WTC11 (cell line): ENCODE measurements at regions of chr1 and their contacts with region 1.

Region 1: DNA sequence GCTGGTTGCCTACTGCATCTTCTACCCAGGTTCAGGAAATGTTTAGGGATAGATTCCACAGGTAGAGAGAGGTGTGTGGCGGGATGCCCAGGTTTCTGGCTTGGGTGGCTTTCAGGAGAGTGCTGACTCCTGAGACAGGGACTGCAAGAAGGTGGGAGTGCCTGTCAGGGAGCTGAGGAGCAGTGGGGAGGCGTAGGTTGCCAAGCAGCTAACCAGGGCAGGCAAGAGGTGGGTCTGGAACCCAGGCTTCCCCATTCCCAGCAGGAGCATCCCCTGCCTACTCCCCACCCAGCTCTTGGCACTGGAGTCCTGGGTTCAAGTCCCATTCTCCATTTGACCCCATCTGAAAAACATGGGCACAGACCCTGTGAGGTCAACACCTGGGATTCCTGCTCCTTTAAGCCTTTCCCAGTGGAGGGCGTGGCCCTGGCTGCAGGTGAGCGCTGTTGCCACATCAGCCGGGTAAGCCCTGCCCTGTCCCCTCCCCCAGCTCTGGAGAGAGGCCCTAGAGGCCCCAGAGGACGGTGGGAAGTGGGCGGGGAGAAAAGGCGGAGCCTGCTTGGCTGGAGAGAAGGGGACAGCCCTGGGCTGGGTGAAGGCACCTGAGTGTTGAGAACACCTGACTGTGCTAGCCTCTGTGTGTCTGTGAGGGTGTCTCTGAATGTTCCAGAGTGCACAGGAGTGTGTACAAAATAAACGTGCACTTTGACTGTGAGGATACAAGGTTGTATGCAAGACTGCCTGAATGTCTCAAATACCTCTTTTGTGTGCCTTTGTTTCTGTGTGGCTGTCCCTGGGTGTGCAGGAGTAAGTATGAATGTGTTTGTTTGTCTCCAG is 14.0 kb upstream of the SYNC start:
- DNase-seq: peak; percentile 99
- ATAC-seq: peak; percentile 95
- H3K4me3 Mint-ChIP-seq: peak overlapping the region; percentile 45
- H3K27ac Mint-ChIP-seq: peak overlapping the region; percentile 92
- H3K4me1 Mint-ChIP-seq: peaks cover 29% of the 10 kb centered on the region
- H3K27me3 Mint-ChIP-seq: peaks cover 3% of the 10 kb centered on the region
- CTCF ChIP-seq: no peak

Region 2: GRCh38 chr1:32400876-32401631 is 315.5 kb before region 1 on chr1:
- CTCF ChIA-PET with region 1: interaction called, 12 read pairs
- POLR2A ChIA-PET with region 1: no interaction called
- DNase-seq: peak; percentile 91
- ATAC-seq: peak; percentile 98
- H3K4me3 Mint-ChIP-seq: no peak overlapping the region
- H3K27ac Mint-ChIP-seq: no peak overlapping the region; the same call in 1 of the 2 replicates
- H3K4me1 Mint-ChIP-seq: no peaks in the 10 kb centered on the region; the same call in 1 of the 2 replicates
- H3K27me3 Mint-ChIP-seq: no peaks in the 10 kb centered on the region
- CTCF ChIP-seq: peak; percentile 78

Region 3: GRCh38 chr1:32612189-32612881 is 104.2 kb before region 1 on chr1:
- CTCF ChIA-PET with region 1: no interaction called
- POLR2A ChIA-PET with region 1: no interaction called
- DNase-seq: peak; percentile 90
- ATAC-seq: peak; percentile 99
- H3K4me3 Mint-ChIP-seq: peak overlapping the region; percentile 75
- H3K27ac Mint-ChIP-seq: peak overlapping the region; percentile 10
- H3K4me1 Mint-ChIP-seq: peaks cover 5% of the 10 kb centered on the region
- H3K27me3 Mint-ChIP-seq: no peaks in the 10 kb centered on the region
- CTCF ChIP-seq: no peak

Region 4: DNA sequence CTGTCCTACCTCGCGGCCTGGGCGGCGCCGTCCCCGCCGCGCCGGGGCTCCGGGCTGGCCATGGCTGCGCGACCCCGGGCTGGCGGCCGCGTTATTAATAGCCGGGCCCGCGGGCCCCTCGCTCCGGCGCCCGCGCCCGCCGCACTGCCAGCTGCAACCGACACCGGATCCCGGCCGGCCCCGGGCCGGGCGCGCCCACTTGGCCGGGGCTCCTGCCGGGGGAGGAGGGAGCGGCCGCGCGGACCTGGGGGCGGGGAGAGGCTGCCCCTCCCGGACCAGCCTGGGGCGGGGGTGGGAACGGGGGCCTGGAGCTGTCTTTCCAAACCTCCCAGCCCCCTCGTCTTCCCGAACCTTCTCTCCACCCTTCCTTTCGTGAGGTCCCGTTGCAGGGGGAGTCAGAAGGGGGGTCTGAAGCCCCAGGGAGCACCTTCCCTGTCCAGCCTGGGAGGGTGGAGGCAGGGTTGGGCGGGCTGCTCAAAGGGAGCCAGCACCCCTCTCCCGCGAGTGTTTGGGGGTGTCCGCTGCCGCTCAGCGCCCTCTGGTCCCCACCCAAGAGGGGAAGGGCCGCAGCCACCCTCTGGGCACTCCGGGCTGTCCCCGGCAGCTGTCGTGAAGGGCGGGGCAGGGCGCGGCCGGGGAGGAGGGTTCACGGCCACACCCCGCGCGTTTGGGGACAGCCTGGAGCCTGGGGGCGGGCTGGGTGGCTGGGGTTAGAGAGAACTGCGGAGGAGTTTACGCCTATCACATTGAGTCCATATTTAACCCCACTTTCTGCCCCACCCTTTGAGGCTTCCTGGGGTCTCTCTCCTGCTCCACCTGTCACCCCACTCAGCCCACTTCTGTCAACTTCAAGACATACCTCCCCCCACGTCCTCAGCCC is 13.7 kb before region 1 on chr1 and contains the start of gene SYNC:
- CTCF ChIA-PET with region 1: interaction called, 43 read pairs
- POLR2A ChIA-PET with region 1: no interaction called
- DNase-seq: no peak
- ATAC-seq: peak; percentile 26
- H3K4me3 Mint-ChIP-seq: peak within 1 kb of the TSS; percentile 70
- H3K27ac Mint-ChIP-seq: no peak within 1 kb of the TSS
- H3K4me1 Mint-ChIP-seq: peaks cover 13% of the 10 kb centered on the region
- H3K27me3 Mint-ChIP-seq: peaks cover 59% of the 10 kb centered on the region
- CTCF ChIP-seq: no peak
- total RNA-seq, gene SYNC: 0.09 to 0.21 TPM (median 0.11 TPM) in 3 replicates

Region 5: GRCh38 chr1:32741413-32742198 is 25.1 kb after region 1 on chr1:
- CTCF ChIA-PET with region 1: interaction called, 72 read pairs
- POLR2A ChIA-PET with region 1: interaction called, 4 read pairs
- DNase-seq: no peak
- ATAC-seq: peak; percentile 1; the same call in 1 of the 2 replicates
- H3K4me3 Mint-ChIP-seq: peak overlapping the region; percentile 84
- H3K27ac Mint-ChIP-seq: no peak overlapping the region
- H3K4me1 Mint-ChIP-seq: peaks cover 41% of the 10 kb centered on the region
- H3K27me3 Mint-ChIP-seq: peaks cover 16% of the 10 kb centered on the region
- CTCF ChIP-seq: no peak

Region 6: GRCh38 chr1:32761253-32761880 is 44.8 kb after region 1 on chr1:
- CTCF ChIA-PET with region 1: interaction called, 59 read pairs
- POLR2A ChIA-PET with region 1: interaction called, 7 read pairs
- DNase-seq: peak; percentile 50
- ATAC-seq: peak; percentile 2
- H3K4me3 Mint-ChIP-seq: peak overlapping the region; percentile 54
- H3K27ac Mint-ChIP-seq: peak overlapping the region; percentile 100
- H3K4me1 Mint-ChIP-seq: peaks cover 84% of the 10 kb centered on the region
- H3K27me3 Mint-ChIP-seq: no peaks in the 10 kb centered on the region
- CTCF ChIP-seq: no peak

Region 7: GRCh38 chr1:32782086-32782485 is 65.6 kb after region 1 on chr1:
- CTCF ChIA-PET with region 1: interaction called, 262 read pairs
- POLR2A ChIA-PET with region 1: interaction called, 3 read pairs
- DNase-seq: no peak
- ATAC-seq: no peak
- H3K4me3 Mint-ChIP-seq: no peak overlapping the region
- H3K27ac Mint-ChIP-seq: no peak overlapping the region
- H3K4me1 Mint-ChIP-seq: no peaks in the 10 kb centered on the region
- H3K27me3 Mint-ChIP-seq: no peaks in the 10 kb centered on the region
- CTCF ChIP-seq: no peak